ENCODE measurements at regions of chr20 and their contacts with region 1.

Region 1: DNA sequence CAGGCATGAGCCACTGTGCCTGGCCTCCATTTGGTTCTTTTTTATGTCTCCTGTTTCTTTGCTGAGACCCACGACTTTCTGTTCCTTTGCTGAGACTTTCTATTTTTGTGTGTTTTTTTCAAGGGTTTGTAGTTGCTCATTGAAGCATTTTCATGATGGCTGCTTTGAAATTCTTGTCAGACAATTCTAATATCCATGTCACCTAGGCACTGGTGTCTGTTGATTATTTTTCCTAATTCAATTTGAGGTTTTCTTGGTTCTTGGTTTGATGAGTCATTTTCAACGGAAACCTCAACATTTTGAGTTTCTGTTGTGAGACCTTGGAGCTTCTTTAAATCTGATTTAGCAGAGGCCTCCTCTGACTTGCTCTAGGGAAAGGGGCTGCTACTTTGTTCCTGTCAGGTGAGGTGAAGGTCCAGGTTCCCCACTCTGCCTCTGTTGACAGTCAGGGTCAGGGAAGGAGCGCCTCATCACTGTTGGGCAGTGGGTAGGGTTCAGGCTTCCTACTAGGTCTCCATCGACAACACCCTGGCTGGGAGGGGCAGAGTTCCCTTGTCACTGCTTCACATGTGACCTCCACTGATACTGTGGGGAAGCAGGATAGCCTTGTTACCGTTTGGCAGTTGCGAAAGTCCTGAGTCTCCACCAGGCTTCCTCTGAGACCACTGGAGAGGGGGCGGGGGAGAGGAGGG is 67.2 kb upstream of the RNF24 start:
- DNase-seq: peak in 2 of 3 donors; percentile 41 to 64
- ATAC-seq: peak; percentile 48 to 68 (median 60)
- H3K4me3 ChIP-seq: no peak overlapping the region
- H3K27ac ChIP-seq: no peak overlapping the region
- H3K4me1 ChIP-seq: peaks cover 0 to 3% (median 0%) of the 10 kb centered on the region in 4 donors
- H3K27me3 ChIP-seq: no peaks in the 10 kb centered on the region
- CTCF ChIP-seq: no peak
- POLR2A ChIP-seq: no peak

Region 2: GRCh38 chr20:4014031-4014474 is 68.5 kb before region 1 on chr20:
- intact Hi-C with region 1: loop called (anchors 10 kb)
- DNase-seq: no peak
- ATAC-seq: peak; percentile 53 to 65 (median 61)
- H3K4me3 ChIP-seq: no peak overlapping the region
- H3K27ac ChIP-seq: peak overlapping the region in 2 of 3 donors; percentile 3 to 16
- H3K4me1 ChIP-seq: peaks cover 0 to 14% (median 0%) of the 10 kb centered on the region in 4 donors
- H3K27me3 ChIP-seq: no peaks in the 10 kb centered on the region
- CTCF ChIP-seq: peak; percentile 42 to 55 (median 49)
- POLR2A ChIP-seq: no peak

Region 3: GRCh38 chr20:4289875-4290274 is 207.3 kb after region 1 on chr20:
- intact Hi-C with region 1: no loop called
- DNase-seq: no peak
- ATAC-seq: no peak
- H3K4me3 ChIP-seq: no peak overlapping the region
- H3K27ac ChIP-seq: no peak overlapping the region
- H3K4me1 ChIP-seq: no peaks in the 10 kb centered on the region
- H3K27me3 ChIP-seq: no peaks in the 10 kb centered on the region
- CTCF ChIP-seq: no peak
- POLR2A ChIP-seq: no peak